Spleen (tissue), 13 donors: ENCODE measurements at regions of chr16 and their contacts with region 1.

Region 1: DNA sequence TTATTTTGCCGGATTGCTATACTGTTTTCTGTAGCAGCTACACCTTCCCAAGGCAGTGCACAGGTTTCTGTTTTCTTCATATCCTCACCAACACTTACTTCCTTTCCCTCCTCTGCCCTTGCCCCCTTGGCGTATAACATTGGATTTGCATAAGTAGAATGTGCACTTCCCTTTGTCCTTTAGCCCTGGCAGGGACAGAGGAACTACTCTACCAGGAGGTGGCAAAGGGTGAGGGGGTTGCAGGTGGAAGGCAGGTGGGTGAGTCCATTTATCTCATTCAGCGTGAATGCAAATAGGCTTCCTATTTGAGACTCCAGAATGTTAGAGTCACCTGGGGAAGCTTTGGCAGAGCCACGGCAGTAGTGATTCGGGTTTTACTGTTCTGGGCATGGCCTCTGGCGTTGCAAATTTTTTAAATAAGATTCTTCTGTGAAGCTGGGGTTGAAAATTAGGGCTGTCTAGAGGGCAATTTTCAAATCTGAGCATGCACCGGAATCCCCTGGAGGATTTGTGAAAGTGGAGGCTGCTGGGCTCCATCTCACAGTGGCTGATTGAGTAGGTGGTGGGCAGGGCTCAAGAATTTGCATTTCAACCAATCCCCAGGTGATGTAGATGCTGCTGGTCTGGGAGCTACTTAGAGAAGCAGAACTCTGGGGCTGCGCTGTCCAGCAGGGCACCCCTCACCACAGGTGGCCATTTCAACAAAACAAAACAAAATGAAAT is 84.7 kb downstream of the PLCG2 start:
- DNase-seq: no peak
- H3K4me3 ChIP-seq: peak overlapping the region in 1 of 8 donors; percentile 41
- H3K27ac ChIP-seq: peak overlapping the region in 7 of 8 donors; percentile 13 to 91 (median 49)
- H3K4me1 ChIP-seq: peaks cover 20 to 91% (median 52%) of the 10 kb centered on the region in 6 donors
- H3K27me3 ChIP-seq: no peaks in the 10 kb centered on the region
- CTCF ChIP-seq: peak in 1 of 11 experiments; percentile 11
- POLR2A ChIP-seq: no peak

Region 2: DNA sequence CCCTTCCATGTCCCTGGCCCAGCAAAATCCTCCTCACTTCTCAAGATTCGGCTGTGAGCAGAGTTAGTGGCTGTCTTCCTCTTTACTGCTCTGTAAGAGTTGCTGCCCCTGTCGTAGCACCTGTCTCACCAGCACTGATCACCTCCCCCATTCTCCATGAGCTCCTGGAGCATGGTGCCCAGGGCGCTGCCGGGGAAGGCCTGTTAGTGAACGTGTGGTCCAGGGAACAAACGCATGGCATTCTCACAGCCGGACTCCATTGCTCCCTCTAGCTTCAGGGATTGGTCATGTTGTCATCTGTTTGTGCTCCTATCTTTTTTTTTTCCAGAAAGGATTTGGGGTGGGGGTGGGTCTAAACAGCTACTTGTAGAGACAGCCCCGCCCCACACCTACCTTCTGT is 278.0 kb before region 1 on chr16:
- intact Hi-C with region 1: no loop called
- DNase-seq: no peak
- H3K4me3 ChIP-seq: no peak overlapping the region
- H3K27ac ChIP-seq: no peak overlapping the region
- H3K4me1 ChIP-seq: peaks cover 0 to 21% (median 9%) of the 10 kb centered on the region in 6 donors
- H3K27me3 ChIP-seq: no peaks in the 10 kb centered on the region
- CTCF ChIP-seq: no peak
- POLR2A ChIP-seq: no peak

Region 3: DNA sequence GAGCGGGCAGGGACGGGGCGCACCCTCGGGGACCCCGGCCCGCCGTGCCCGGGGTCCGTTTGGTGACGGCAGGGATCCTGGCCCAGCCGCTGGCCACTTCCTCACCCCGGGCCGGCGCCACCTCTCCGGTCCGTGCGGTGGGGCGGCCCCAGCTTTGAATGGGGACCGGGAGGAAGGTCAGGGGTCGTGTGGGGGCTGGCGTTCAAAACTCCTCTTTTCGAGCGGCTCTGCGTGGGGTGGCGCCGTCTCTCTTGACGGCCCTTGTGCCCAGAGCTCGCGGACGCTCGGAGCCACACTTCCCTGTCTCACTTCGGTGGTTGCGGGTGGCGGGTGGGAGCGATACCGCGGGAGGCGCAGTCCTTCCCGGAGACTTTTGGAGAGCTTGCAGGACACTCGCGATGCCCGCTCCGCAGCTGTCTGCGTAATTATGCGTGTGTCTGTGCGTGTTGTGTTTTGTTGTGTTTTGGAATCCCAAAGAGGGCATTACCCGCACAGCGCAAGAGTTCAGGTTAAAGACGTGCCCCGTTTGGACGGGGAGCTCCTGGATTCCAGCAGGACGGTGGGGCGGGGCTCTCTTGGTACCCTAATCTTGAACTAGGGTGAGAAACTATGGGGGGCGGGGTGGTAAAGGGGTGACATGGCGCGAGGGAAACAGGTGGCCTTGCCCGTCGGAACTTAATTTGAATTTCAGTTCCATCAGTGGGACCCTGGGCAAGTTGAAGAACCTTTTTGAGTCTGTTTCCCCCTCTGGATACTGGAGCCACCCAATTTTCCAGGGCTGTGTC is 84.1 kb before region 1 on chr16:
- intact Hi-C with region 1: loop called (anchors 10 kb)
- DNase-seq: peak; percentile 91
- H3K4me3 ChIP-seq: peak overlapping the region; percentile 74 to 98 (median 86)
- H3K27ac ChIP-seq: peak overlapping the region; percentile 75 to 97 (median 92)
- H3K4me1 ChIP-seq: peaks cover 14 to 74% (median 61%) of the 10 kb centered on the region in 6 donors
- H3K27me3 ChIP-seq: peaks cover 0 to 4% (median 0%) of the 10 kb centered on the region in 7 donors
- CTCF ChIP-seq: peak in 3 of 11 experiments; percentile 6 to 14 (median 14)
- POLR2A ChIP-seq: no peak